ENCODE measurements at regions of chr2 and their contacts with region 1.

Region 1: GRCh38 chr2:20661067-20661980 is 5.6 kb upstream of the GDF7 start:
- DNase-seq: peak; percentile 80
- H3K4me3 ChIP-seq: no peak overlapping the region
- H3K27ac ChIP-seq: no peak overlapping the region
- H3K4me1 ChIP-seq: peaks cover 8% of the 10 kb centered on the region
- H3K27me3 ChIP-seq: peaks cover 57 to 64% of the 10 kb centered on the region in 2 experiments
- CTCF ChIP-seq: peak; percentile 88 to 92
- POLR2A ChIP-seq: peak; percentile 45

Region 2: GRCh38 chr2:20691076-20691734 is 29.9 kb after region 1 on chr2:
- CTCF ChIA-PET with region 1: interaction called, 12 read pairs
- POLR2A ChIA-PET with region 1: no interaction called
- dilution Hi-C with region 1: no loop called
- intact Hi-C with region 1: no loop called
- DNase-seq: no peak
- H3K4me3 ChIP-seq: no peak overlapping the region
- H3K27ac ChIP-seq: no peak overlapping the region
- H3K4me1 ChIP-seq: no peaks in the 10 kb centered on the region
- H3K27me3 ChIP-seq: no peaks in the 10 kb centered on the region
- CTCF ChIP-seq: no peak
- POLR2A ChIP-seq: no peak

Region 3: DNA sequence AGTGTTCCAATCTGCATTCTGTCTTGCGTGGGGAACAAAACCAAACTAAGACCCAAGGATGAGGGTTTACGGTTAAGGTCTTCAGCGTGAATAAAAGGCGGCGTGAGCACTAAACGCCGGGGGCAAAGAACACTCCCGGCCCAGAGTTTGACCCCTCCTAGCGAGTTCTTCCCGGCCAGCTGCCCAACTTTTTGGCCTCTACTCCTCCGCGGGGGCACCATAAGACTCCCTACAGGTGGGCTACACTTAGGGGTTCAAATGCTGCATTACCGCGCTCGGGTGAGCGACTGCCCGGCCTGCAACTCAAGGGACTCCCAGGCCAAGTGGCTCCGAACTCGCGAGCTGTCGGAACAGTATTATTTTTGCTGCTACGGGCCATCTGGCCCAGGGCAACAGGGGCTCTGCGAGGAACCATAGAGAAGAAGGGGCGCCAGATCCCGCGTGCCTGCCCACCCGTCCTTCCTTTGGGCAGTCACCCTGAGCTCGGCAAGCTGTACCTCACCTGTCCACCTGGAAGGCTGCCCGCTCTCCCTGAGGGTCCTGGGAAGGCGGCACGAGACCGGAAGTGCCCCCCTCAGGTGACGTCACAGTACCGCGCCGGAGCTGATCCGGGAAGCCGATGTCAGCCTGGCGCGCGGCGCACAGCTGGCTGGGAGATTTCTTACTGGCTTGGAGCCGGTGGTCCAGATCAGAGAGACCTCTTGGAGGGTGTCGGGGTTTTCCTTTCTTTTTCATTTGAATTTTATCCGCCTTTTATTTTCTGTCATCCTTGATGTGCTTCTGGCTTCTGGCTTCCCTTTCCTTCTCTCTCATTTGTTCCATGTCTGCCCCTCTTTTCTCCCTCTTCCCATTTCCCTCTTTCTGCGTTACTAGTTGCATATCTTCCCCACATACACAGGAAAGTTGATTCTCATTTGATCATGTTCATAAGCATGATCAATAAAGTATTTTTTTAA is 161.5 kb after region 1 on chr2 and contains the start of gene LDAH:
- CTCF ChIA-PET with region 1: interaction called, 16 read pairs
- POLR2A ChIA-PET with region 1: interaction called, 3 read pairs
- dilution Hi-C with region 1: no loop called
- intact Hi-C with region 1: loop called (anchors 1 kb)
- DNase-seq: peak; percentile 87
- H3K4me3 ChIP-seq: peak within 1 kb of the TSS; percentile 51 to 89 (median 66)
- H3K27ac ChIP-seq: peak within 1 kb of the TSS; percentile 72
- H3K4me1 ChIP-seq: no peaks in the 10 kb centered on the region
- H3K27me3 ChIP-seq: peaks cover 0 to 2% of the 10 kb centered on the region in 2 experiments
- CTCF ChIP-seq: no peak
- POLR2A ChIP-seq: peak; percentile 90
- total RNA-seq, gene LDAH: 24.0 and 24.2 TPM in 2 replicates

Region 4: DNA sequence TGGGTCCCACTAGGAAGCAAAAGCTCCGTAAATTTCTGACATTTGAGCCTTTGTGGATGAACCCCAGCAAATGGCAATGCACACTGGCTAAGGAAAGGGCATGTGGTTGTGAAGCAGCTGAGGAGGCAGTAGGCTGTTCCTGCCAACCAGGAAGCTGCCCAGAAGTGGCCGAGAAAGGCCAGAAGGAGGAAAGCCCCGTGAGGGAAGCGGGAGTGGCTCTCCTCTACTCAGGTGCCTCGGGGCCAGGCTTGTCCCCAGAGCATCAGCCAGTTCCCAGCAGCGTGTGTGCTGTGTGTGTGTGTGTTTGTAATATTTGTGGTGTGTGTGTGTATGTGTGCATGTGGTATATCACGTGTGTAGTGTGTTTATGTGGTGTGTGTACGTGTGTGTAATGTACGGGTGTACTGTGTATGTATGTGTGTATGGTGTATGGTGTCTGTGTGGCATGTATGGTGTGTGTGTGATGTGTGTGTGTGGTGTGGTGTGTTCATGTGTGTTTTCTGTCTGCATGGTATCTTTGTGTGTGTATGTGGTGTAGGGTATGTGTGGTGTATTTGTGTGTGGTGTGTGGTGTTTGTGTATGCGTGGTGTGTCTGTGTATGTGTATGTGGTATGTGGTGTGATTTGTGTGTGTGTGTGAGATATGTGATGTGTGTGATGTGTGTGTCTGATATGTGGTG is 292.0 kb after region 1 on chr2:
- CTCF ChIA-PET with region 1: interaction called, 531 read pairs
- POLR2A ChIA-PET with region 1: no interaction called
- dilution Hi-C with region 1: no loop called
- intact Hi-C with region 1: no loop called
- DNase-seq: no peak
- H3K4me3 ChIP-seq: no peak overlapping the region
- H3K27ac ChIP-seq: no peak overlapping the region
- H3K4me1 ChIP-seq: no peaks in the 10 kb centered on the region
- H3K27me3 ChIP-seq: no peaks in the 10 kb centered on the region
- CTCF ChIP-seq: no peak
- POLR2A ChIP-seq: no peak

Region 5: GRCh38 chr2:21025690-21026478 is 364.6 kb after region 1 on chr2:
- CTCF ChIA-PET with region 1: interaction called, 35 read pairs
- POLR2A ChIA-PET with region 1: no interaction called
- dilution Hi-C with region 1: no loop called
- intact Hi-C with region 1: loop called (anchors 1 kb)
- DNase-seq: no peak
- H3K4me3 ChIP-seq: no peak overlapping the region
- H3K27ac ChIP-seq: no peak overlapping the region
- H3K4me1 ChIP-seq: no peaks in the 10 kb centered on the region
- H3K27me3 ChIP-seq: no peaks in the 10 kb centered on the region
- CTCF ChIP-seq: no peak
- POLR2A ChIP-seq: no peak

Region 6: GRCh38 chr2:21165350-21165749 is 504.0 kb after region 1 on chr2:
- CTCF ChIA-PET with region 1: interaction called, 6 read pairs
- POLR2A ChIA-PET with region 1: no interaction called
- dilution Hi-C with region 1: no loop called
- intact Hi-C with region 1: loop called (anchors 2 kb)
- DNase-seq: peak; percentile 11
- H3K4me3 ChIP-seq: no peak overlapping the region
- H3K27ac ChIP-seq: no peak overlapping the region
- H3K4me1 ChIP-seq: no peaks in the 10 kb centered on the region
- H3K27me3 ChIP-seq: no peaks in the 10 kb centered on the region
- CTCF ChIP-seq: no peak
- POLR2A ChIP-seq: no peak